Activated B cell treated with CpG ODN at 0.5 μM for 24 hours (primary cell): ENCODE measurements at regions of chr9 and their contacts with region 1.

Region 1: DNA sequence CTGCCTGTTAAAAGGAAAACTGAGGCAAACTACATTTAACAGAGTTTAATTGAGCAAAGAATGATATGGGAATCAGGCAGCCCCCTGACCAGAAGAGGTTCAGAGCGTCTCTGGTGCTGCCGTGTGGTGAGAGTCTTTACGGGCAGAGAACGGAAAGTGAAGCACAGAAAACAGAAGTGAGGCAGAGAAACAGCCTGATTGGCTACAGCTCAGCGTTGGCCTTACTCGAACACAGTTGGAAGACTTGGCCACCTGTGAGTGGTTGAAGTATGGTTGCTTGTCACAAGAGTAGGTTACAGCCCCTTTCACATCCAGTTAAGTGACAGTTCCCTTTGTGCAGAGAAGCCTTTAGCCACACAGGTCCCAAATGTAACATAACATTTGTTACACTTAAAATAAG is 16.9 kb upstream of the FBP1 start:
- DNase-seq: peak; percentile 36
- ATAC-seq: peak; percentile 100
- H3K4me3 Mint-ChIP-seq: peak overlapping the region; percentile 80
- H3K27ac Mint-ChIP-seq: peak overlapping the region; percentile 90
- H3K4me1 Mint-ChIP-seq: peaks cover 18% of the 10 kb centered on the region
- H3K27me3 Mint-ChIP-seq: no peaks in the 10 kb centered on the region
- CTCF ChIP-seq: no peak

Region 2: DNA sequence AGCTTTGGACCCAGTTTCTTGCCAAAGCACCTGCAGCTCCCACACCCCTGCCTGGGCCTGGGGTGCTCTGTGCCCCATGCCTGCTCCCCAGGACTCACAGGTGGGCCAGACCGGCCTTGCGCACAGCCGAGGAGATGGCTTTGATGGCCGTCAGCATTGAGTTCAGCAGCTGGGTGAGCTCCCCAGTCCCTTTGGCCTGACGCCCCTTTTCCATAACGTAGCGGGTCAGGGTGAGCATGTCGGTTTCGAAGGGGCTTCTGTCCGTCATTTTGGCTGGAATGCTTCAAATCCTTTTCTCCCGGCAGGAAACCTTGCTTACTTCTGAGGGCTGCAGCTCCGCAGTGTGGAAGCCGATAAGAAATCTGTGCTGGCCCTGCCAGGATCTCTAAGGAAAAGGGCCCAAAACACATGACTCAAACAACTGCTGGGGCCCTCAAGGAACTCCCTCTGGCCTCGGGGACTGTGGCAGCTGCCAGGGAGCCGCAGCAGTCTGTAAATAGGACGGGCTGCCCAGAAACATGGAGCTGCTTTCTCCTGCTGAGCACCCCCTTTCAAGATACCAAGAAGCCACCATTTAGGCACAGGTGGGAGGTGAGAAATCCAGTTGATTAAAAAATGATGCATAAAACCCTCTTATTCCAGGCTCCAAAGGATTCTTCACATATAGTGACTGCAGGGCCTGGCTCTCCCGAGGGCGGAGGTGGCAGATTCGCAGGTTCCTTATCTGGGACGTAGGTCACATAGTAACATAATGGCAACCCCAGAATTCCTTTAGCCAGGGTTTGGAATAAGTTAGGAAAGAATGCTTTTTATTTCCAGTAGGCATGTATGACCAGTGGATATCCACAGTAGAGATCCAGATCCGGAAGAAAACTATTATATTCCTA is 62.5 kb before region 1 on chr9 and contains the start of gene FBP2:
- CTCF ChIA-PET with region 1: no interaction called
- POLR2A ChIA-PET with region 1: no interaction called
- intact Hi-C with region 1: no loop called
- DNase-seq: no peak
- ATAC-seq: no peak
- H3K4me3 Mint-ChIP-seq: no peak within 1 kb of the TSS
- H3K27ac Mint-ChIP-seq: no peak within 1 kb of the TSS
- H3K4me1 Mint-ChIP-seq: no peaks in the 10 kb centered on the region
- H3K27me3 Mint-ChIP-seq: peaks cover 7% of the 10 kb centered on the region
- CTCF ChIP-seq: no peak
- total RNA-seq, gene FBP2: not detected in 2 replicates

Region 3: DNA sequence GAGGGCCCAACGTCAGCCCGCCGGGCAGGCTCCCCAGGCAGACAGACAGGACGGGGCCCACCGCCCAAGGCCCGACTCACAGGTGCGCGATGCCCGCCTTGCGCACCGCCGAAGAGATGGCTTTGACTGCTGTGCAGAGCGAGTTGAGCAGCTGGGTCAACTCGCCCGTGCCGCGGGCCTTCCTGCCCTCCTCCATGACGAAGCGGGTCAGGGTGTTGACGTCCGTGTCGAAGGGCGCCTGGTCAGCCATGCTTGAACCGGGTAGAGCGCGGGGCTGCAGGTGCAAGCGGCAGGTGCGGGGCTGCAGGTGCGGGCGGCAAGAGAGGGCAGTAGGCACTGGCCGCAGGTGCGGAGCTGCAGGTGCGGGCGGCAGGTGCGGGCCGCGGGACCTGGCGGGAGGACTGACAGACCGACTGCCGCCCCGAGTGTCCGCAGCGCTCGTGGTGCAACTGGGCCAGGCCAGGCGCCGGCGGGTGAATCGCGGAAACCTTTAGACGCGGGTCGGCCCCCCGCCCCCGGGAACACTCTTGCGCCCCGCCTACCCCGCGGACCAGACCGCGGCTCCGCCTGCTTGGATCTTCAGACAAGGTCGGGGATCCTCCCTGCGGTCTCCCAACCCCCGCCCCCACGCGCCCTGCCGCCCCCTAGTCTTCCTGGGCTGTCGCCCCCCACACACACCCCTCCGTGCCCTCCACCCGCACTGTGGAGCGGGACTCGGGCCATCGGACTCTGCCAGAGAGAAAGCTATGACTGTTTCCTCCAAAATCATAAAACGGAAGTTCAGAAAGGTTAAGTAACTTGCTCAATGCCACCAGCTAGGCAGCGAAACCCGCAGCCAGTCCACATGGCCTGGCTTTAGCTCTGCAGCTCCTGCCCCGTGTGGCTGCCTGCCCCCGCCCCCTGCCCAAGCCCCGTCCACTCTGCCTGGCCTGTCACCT is 16.9 kb before region 1 on chr9 and contains the start of gene FBP1:
- CTCF ChIA-PET with region 1: no interaction called
- POLR2A ChIA-PET with region 1: interaction called, 7 read pairs
- intact Hi-C with region 1: loop called (anchors 1 kb)
- DNase-seq: peak; percentile 55
- ATAC-seq: peak; percentile 82
- H3K4me3 Mint-ChIP-seq: peak within 1 kb of the TSS; percentile 96
- H3K27ac Mint-ChIP-seq: peak within 1 kb of the TSS; percentile 68
- H3K4me1 Mint-ChIP-seq: peaks cover 18% of the 10 kb centered on the region
- H3K27me3 Mint-ChIP-seq: peaks cover 5% of the 10 kb centered on the region
- CTCF ChIP-seq: no peak
- total RNA-seq, gene FBP1: 0.80 and 1.2 TPM in 2 replicates

Region 4: GRCh38 chr9:94668418-94668932 is 12.3 kb after region 1 on chr9:
- CTCF ChIA-PET with region 1: interaction called, 14 read pairs
- POLR2A ChIA-PET with region 1: interaction called, 17 read pairs
- intact Hi-C with region 1: no loop called
- DNase-seq: no peak
- ATAC-seq: no peak
- H3K4me3 Mint-ChIP-seq: no peak overlapping the region
- H3K27ac Mint-ChIP-seq: no peak overlapping the region
- H3K4me1 Mint-ChIP-seq: peaks cover 2% of the 10 kb centered on the region
- H3K27me3 Mint-ChIP-seq: peaks cover 6% of the 10 kb centered on the region
- CTCF ChIP-seq: no peak